PC-3 (cell line): ENCODE measurements at regions of chr10 and their contacts with region 1.

Region 1: GRCh38 chr10:28503114-28503513 is 29.8 kb upstream of the WAC start:
- DNase-seq: peak; percentile 81
- ATAC-seq: peak; percentile 84
- H3K4me3 ChIP-seq: peak overlapping the region; percentile 76
- H3K27ac ChIP-seq: no peak overlapping the region
- H3K4me1 ChIP-seq: peaks cover 13% of the 10 kb centered on the region
- H3K27me3 ChIP-seq: no peaks in the 10 kb centered on the region
- CTCF ChIP-seq: no peak; the same call in 1 of the 2 replicates

Region 2: GRCh38 chr10:28532383-28533175 is 29.5 kb after region 1 on chr10 and contains the start of gene WAC:
- CTCF ChIA-PET with region 1: no interaction called
- POLR2A ChIA-PET with region 1: interaction called, 10 read pairs
- intact Hi-C with region 1: no loop called
- DNase-seq: peak; percentile 87
- ATAC-seq: peak; percentile 88
- H3K4me3 ChIP-seq: peak within 1 kb of the TSS; percentile 100
- H3K27ac ChIP-seq: peak within 1 kb of the TSS; percentile 94
- H3K4me1 ChIP-seq: peaks cover 17% of the 10 kb centered on the region
- H3K27me3 ChIP-seq: no peaks in the 10 kb centered on the region
- CTCF ChIP-seq: no peak
- total RNA-seq, gene WAC: 49.2 and 58.1 TPM in 2 replicates

Region 3: GRCh38 chr10:28633750-28634149 is 130.6 kb after region 1 on chr10:
- CTCF ChIA-PET with region 1: no interaction called
- POLR2A ChIA-PET with region 1: no interaction called
- intact Hi-C with region 1: no loop called
- DNase-seq: peak; percentile 69
- ATAC-seq: peak; percentile 85
- H3K4me3 ChIP-seq: no peak overlapping the region
- H3K27ac ChIP-seq: no peak overlapping the region
- H3K4me1 ChIP-seq: peaks cover 19% of the 10 kb centered on the region
- H3K27me3 ChIP-seq: no peaks in the 10 kb centered on the region
- CTCF ChIP-seq: no peak